ENCODE measurements at regions of chr2 and their contacts with region 1.

Region 1: DNA sequence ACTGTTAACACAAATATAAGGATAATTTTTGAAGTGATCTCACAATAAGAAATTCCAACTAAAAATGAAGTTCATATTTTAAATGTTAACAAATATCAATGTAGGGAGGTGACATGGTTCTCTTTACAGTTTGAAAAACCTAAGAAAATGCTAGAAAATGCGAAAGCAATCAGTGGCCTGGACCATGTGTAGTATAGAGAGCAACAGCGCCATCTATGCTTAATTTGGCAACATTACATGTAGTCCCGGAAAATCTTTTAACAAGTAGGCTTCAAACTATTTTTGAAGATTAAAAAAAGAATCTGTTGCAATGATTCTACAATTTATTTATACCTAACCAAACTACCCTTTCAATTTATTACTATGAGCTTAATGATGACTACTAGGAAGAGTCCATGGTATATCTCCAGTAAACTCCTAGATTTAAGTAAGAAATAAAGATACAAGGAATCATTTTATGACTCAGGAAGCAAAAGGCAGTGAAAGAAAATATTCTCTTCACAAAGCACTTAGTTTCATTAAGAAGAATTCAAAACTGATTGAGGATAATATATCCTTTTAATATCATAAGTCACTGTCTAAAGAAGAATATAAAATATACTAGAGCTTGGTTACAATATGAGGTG is 33.3 kb downstream of the NDUFA10 start:
- DNase-seq: no peak
- H3K4me3 ChIP-seq: peak overlapping the region in 1 of 4 donors; percentile 3
- H3K27ac ChIP-seq: peak overlapping the region; percentile 60 to 80 (median 71)
- H3K4me1 ChIP-seq: peaks cover 0 to 21% (median 16%) of the 10 kb centered on the region in 4 donors
- H3K27me3 ChIP-seq: no peaks in the 10 kb centered on the region
- CTCF ChIP-seq: peak; percentile 69 to 82 (median 77)
- EP300 ChIP-seq: no peak
- POLR2A ChIP-seq: no peak

Region 2: GRCh38 chr2:239035361-239036078 is 956.3 kb before region 1 on chr2:
- intact Hi-C with region 1: loop called (anchors 1 kb)
- DNase-seq: peak; percentile 76
- H3K4me3 ChIP-seq: no peak overlapping the region
- H3K27ac ChIP-seq: no peak overlapping the region
- H3K4me1 ChIP-seq: peaks cover 0 to 8% (median 4%) of the 10 kb centered on the region in 4 donors
- H3K27me3 ChIP-seq: no peaks in the 10 kb centered on the region
- CTCF ChIP-seq: peak in 3 of 4 experiments; percentile 58 to 99 (median 62)
- EP300 ChIP-seq: no peak
- POLR2A ChIP-seq: no peak

Region 3: DNA sequence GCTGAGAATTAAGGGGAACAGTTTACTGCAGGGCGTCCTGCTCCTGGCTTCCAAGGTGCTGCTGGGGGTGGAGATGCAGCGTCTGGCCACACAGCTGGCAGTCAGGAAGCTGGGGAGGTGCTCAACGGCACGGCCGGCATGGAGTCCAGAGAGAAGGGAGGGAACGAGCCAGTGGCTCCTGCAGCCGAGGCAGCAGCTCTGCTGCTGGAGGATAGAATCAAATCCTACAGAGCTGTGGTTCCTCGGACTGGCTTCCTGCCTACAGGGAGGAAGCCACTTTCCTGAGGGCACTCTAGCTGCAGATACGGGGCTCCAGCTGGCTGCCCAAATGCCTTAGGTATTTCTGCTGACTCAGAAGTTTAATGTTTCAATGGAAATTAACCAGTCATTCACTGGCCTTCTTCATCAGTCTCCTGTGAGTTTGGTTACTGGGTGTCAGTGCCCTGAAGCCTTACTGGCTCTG is 877.7 kb before region 1 on chr2:
- intact Hi-C with region 1: loop called (anchors 10 kb)
- DNase-seq: no peak
- H3K4me3 ChIP-seq: no peak overlapping the region
- H3K27ac ChIP-seq: peak overlapping the region; percentile 80 to 96 (median 88)
- H3K4me1 ChIP-seq: peaks cover 0 to 82% (median 55%) of the 10 kb centered on the region in 4 donors
- H3K27me3 ChIP-seq: no peaks in the 10 kb centered on the region
- CTCF ChIP-seq: no peak
- EP300 ChIP-seq: no peak
- POLR2A ChIP-seq: no peak

Region 4: DNA sequence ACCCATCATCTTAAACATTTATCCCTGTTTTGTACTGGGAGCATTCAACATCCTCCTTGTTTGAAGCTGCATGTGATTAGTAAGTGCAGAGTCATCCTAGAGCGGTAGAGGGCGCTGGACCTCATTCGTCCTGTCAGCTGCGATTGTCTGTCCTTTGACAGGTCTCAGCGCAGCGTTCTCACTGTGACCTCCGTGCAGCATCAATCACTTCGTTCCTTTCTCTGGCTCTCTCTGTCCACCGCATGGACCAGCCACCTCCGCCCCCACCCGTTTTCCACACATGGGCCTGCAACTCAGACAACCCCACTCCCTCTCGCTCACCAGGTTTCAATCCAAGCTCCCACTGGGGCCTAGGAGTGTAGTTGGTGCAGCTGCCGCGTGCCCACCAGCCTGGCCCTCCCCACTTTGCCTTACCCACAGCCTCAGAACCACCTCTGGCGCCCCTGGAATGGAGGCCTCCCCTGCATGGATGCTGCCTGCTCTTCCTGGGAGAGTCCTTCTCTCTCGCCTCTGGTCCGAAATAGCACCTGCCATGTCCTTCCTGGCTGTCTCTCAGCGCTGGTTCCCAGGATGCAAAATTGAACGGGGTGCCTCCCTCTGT is 57.1 kb before region 1 on chr2:
- intact Hi-C with region 1: loop called (anchors 1 kb)
- DNase-seq: peak; percentile 84
- H3K4me3 ChIP-seq: no peak overlapping the region
- H3K27ac ChIP-seq: no peak overlapping the region
- H3K4me1 ChIP-seq: peaks cover 0 to 4% (median 4%) of the 10 kb centered on the region in 4 donors
- H3K27me3 ChIP-seq: no peaks in the 10 kb centered on the region
- CTCF ChIP-seq: peak; percentile 59 to 87 (median 82)
- EP300 ChIP-seq: no peak
- POLR2A ChIP-seq: no peak

Region 5: DNA sequence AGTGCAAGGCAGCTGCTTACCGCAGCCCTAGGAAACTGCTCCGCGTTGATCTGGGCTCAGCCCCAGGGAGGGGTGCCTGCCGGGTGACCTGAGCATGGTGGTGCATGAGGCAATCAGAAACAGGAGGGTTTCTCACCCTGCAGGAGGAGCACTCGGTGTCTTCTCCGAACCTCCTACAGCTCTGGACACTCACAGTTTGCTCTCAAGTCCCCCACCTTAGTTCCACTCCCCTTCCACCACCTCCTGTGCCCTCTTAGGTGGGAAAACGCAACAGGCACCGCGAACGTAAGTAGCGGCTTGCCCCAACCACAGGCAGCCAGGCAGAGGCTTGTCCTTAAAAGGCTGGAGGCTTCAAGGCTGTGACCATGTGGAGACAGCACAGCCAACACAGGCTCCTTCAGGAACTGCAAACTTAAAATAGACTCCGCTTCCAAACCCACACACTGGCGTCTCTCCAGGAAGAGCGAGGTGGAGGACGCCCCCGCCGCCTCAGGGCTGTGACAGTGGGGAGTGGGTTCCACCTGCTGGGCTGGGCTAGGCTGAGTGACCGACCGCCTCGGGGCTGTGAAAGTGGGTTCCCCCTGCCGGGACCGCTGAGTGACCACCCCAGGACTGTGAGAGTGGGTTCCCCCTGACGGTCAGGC is 38.3 kb before region 1 on chr2:
- intact Hi-C with region 1: loop called (anchors 5 kb)
- DNase-seq: peak; percentile 93
- H3K4me3 ChIP-seq: peak overlapping the region in 2 of 4 donors; percentile 0 to 29
- H3K27ac ChIP-seq: peak overlapping the region; percentile 83 to 91 (median 87)
- H3K4me1 ChIP-seq: peaks cover 0 to 56% (median 51%) of the 10 kb centered on the region in 4 donors
- H3K27me3 ChIP-seq: no peaks in the 10 kb centered on the region
- CTCF ChIP-seq: no peak
- EP300 ChIP-seq: peak in 2 of 4 donors; percentile 71 to 86
- POLR2A ChIP-seq: peak; percentile 15 to 20

Measured in sigmoid colon (tissue), 7 donors.